ENCODE measurements at regions of chr5 and their contacts with region 1.

Region 1: GRCh38 chr5:172910828-172911627 is 48.2 kb upstream of the RPL26L1 start:
- DNase-seq: peak; percentile 80
- H3K4me3 Mint-ChIP-seq: no peak overlapping the region
- H3K27ac Mint-ChIP-seq: peak overlapping the region; percentile 36
- H3K4me1 Mint-ChIP-seq: peaks cover 4% of the 10 kb centered on the region
- H3K27me3 Mint-ChIP-seq: no peaks in the 10 kb centered on the region
- CTCF ChIP-seq: peak; percentile 12

Region 2: DNA sequence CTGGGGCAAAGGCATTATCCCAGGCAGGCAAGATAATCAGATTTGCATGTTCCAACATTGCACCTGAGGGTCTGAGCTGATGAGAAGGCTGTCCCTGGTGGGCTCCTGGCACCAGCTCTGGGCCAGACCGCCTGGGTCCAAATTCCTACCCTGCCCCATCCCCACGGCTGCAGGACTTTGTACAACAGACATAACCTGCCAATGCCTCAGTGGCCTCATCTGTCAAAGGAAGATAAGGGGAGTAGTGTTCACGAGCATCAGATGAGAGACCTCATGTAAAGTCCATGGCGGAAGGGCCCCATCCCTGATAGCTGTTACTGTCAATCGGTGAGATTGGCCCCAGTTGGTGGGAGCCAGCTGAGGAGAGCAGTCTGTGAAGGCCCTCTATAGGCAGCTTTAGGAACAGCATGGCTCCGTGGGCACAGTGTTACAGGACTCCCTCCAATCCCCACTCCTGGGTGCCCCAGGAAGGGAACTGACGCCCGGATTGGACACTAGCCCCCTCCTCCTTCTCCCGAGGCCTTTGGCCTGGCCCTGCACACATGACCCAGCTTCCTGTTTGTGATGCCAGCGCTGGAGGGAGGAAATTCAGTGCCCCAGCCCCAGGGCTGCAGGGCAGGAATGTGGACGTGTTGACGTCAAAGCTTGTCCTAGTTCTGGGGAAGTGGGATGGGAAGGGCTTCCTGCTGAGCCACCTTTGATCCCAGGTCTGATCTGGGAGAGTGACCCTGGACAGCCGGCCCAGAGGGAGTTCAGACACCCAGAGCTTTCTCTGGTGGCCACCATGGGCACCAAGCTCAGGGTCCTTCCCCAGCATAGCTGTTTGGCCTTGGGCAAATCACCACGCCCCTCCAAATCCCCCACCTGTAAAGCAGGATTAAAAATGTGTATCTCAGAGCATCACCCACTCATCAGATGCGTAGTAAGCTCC is 196.3 kb before region 1 on chr5:
- CTCF ChIA-PET with region 1: interaction called, 17 read pairs
- intact Hi-C with region 1: loop called (anchors 1 kb)
- DNase-seq: peak; percentile 83
- H3K4me3 Mint-ChIP-seq: no peak overlapping the region
- H3K27ac Mint-ChIP-seq: no peak overlapping the region
- H3K4me1 Mint-ChIP-seq: peaks cover 8% of the 10 kb centered on the region
- H3K27me3 Mint-ChIP-seq: peaks cover 35% of the 10 kb centered on the region
- CTCF ChIP-seq: peak; percentile 93